PC-3 (cell line): ENCODE measurements at regions of chr18 and their contacts with region 1.

Region 1: GRCh38 chr18:703213-703967 is 9.0 kb downstream of the ENOSF1 start:
- DNase-seq: peak; percentile 92
- ATAC-seq: peak; percentile 93
- H3K4me3 ChIP-seq: peak overlapping the region; percentile 53
- H3K27ac ChIP-seq: peak overlapping the region; percentile 99
- H3K4me1 ChIP-seq: peaks cover 42% of the 10 kb centered on the region
- H3K27me3 ChIP-seq: no peaks in the 10 kb centered on the region
- CTCF ChIP-seq: no peak

Region 2: DNA sequence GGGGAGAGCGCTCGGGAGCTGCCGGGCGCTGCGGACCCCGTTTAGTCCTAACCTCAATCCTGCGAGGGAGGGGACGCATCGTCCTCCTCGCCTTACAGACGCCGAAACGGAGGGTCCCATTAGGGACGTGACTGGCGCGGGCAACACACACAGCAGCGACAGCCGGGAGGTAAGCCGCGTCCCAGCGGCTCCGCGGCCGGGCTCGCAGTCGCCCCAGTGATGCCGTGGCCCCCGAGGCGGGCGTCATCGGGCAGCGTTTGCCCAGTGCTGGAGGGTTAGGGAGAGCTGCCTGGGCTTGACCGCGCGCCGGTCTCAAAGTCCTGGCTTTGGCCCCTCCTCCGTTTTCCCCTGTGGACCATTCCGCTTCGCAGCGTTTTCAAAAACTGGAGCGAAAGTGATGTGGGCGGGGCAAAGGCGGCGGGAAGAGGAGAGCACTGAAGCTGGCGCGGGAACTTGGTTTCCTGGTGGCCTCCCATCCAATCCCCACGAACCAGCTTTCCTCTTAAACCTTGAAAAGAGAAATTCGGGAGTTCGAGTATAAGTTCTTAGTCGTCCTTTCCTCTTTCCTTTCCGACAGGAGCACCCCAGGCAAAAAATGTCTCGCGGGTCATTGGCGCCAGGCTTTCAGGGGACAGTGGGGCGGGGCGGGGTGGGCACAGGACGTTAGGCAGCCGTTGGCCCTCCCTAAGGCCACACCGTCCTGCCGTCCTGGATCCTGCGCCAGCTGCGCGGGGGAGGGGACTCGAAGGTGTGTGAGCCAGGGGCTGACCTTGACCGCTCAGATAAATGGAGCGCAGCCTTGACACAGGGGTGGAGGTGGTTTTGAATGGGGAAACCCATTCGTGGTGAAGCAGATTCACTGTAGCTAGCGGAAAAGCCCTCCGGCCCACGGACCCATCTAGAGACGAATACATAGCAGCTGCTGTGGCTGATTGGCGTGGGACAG is 45.1 kb before region 1 on chr18:
- CTCF ChIA-PET with region 1: no interaction called
- POLR2A ChIA-PET with region 1: interaction called, 3 read pairs
- intact Hi-C with region 1: loop called (anchors 10 kb)
- DNase-seq: peak; percentile 96
- ATAC-seq: peak; percentile 84
- H3K4me3 ChIP-seq: peak overlapping the region; percentile 94
- H3K27ac ChIP-seq: peak overlapping the region; percentile 79
- H3K4me1 ChIP-seq: peaks cover 16% of the 10 kb centered on the region
- H3K27me3 ChIP-seq: no peaks in the 10 kb centered on the region
- CTCF ChIP-seq: no peak

Region 3: DNA sequence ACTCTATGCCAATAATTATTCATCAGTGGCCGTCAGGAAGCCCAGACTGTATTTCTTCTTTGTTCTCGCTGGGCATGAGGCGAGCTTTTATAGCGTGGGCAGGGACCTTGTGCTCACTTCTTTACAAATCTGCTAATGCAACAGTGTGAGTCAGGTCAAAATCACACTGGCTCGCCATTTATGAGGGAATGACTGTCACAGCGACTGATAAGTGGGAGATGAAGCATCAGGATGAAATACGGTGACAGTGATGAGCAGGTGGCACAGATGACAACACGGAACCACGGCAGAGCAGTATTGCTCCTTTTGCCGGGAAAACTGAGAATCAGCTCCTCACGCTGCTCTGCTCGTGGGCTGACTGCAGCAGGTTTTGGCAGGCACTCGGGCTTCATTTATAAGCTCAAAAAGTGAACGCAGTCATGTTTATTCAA is 25.4 kb before region 1 on chr18:
- CTCF ChIA-PET with region 1: no interaction called
- POLR2A ChIA-PET with region 1: interaction called, 16 read pairs
- intact Hi-C with region 1: loop called (anchors 1 kb)
- DNase-seq: peak; percentile 83
- ATAC-seq: peak; percentile 93
- H3K4me3 ChIP-seq: no peak overlapping the region
- H3K27ac ChIP-seq: peak overlapping the region; percentile 64
- H3K4me1 ChIP-seq: peaks cover 17% of the 10 kb centered on the region
- H3K27me3 ChIP-seq: no peaks in the 10 kb centered on the region
- CTCF ChIP-seq: no peak